Gastrocnemius medialis (tissue), 4 donors: ENCODE measurements at regions of chr2 and their contacts with region 1.

Region 1: GRCh38 chr2:53786705-53787612 is at the starts of genes ASB3 and ERLEC1:
- DNase-seq: peak; percentile 84
- ATAC-seq: peak; percentile 88 to 95
- H3K4me3 ChIP-seq: peak within 1 kb of the TSS; percentile 90 to 97 (median 92)
- H3K27ac ChIP-seq: peak within 1 kb of the TSS; percentile 83 to 91 (median 85)
- H3K4me1 ChIP-seq: peaks cover 31 to 40% of the 10 kb centered on the region in 2 donors
- H3K27me3 ChIP-seq: no peaks in the 10 kb centered on the region
- CTCF ChIP-seq: no peak
- POLR2A ChIP-seq: peak; percentile 62 to 71
- total RNA-seq, gene ASB3: 5.0 to 7.6 (median 6.4) TPM
- total RNA-seq, gene ERLEC1: 26.7 to 53.6 (median 28.9) TPM

Region 2: DNA sequence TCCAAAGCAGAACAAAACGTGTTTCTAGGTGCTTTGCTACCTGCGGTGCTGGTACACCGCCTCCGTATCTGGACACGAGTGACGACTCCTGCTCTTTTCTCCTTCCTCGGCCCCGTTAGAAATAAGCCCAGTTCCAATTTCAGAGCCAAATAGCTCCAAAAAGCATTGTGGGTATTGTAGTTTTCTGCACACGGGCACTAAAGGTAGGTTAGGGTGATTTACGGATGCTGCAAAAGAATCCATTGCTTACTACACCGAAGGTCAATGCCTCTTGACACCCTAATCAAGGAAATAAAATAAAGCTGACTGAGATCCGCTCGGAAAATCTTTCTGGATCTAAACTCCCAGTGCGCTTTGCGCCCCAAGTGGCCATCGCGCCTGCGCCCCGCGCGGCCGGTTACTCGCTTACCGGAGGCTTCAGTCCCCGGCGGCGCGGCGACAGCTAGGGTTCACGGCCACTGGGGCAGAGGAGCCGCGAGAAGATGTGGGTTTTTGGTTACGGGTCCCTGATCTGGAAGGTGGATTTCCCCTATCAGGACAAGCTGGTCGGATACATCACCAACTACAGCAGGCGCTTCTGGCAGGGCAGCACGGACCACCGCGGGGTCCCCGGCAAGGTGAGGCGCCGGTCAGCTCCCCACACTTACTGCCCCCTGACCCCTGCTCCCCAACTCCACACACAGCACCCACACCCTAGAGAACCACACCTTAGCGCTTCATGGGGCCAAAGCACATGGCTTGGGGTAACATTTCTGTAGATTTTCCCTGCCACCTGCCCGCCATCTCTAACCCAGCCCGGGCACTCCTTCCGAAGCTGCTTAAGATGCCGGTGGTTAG is 19.3 kb before region 1 on chr2 and contains the start of gene CHAC2:
- in situ Hi-C with region 1: no loop called
- intact Hi-C with region 1: loop called (anchors 1 kb)
- DNase-seq: peak; percentile 73 to 84
- ATAC-seq: peak; percentile 96 to 98
- H3K4me3 ChIP-seq: peak within 1 kb of the TSS; percentile 66 to 92 (median 71)
- H3K27ac ChIP-seq: peak within 1 kb of the TSS; percentile 82 to 89 (median 84)
- H3K4me1 ChIP-seq: peaks cover 6 to 14% of the 10 kb centered on the region in 2 donors
- H3K27me3 ChIP-seq: no peaks in the 10 kb centered on the region
- CTCF ChIP-seq: peak; percentile 23 to 69 (median 42)
- POLR2A ChIP-seq: peak; percentile 61 to 79
- total RNA-seq, gene CHAC2: 3.7 to 10.3 (median 6.0) TPM